Activated CD8-positive, alpha-beta memory T cell treated with anti-CD3 and anti-CD28 coated beads, Interleukin-2, amount 10 ng/mL, durations not matched to agents 7 days and 5 days (primary cell): ENCODE measurements at regions of chr7 and their contacts with region 1.

Region 1: GRCh38 chr7:101077303-101078089 is 7.8 kb upstream of the TRIM56 start:
- DNase-seq: peak; percentile 87
- ATAC-seq: peak; percentile 99
- H3K4me3 Mint-ChIP-seq: no peak overlapping the region
- H3K27ac Mint-ChIP-seq: no peak overlapping the region
- H3K4me1 Mint-ChIP-seq: peaks cover 5% of the 10 kb centered on the region
- H3K27me3 Mint-ChIP-seq: peaks cover 16% of the 10 kb centered on the region

Region 2: DNA sequence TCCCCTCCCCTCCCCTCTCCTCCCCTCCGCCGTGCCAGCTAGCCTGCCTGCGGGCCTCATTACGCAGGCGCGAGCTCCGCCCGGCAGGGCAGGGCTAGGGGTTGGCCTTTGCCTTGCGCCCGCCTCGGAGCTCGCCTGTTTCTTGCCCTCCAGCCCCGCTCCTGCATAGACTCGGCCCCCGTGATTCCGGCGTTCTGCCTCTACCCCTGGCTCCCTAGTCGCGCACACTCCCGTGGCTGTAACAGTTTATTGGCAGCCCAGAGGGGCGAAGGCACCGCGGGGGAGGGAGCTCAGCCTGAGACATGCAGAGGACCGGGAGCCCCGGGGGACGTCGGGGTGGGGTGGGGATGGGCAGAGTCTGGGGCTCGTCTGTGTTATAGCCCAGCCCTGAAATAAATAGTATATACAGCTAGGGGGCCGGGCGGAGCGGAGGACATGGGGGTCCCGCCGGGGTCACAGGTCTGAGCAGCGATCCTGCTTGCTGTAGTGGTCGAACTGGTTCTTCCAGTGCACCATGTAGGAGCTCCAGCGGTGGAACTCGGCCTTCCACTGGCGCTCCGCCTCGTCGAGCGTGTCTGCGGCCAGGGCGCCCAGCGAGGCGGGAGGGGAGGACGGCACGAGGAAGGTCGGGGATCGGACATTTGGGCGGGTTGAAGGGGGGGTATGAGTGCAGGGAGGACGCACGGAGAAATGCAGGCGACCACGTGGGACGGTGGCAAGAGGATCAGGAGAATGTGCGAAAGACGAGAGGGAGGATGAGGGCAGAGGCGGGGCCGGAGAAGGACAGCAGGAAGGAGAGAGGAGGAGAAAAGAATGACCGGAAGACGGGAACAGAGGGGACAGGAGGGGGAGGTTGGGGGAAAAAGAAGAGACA is 187.5 kb before region 1 on chr7:
- CTCF ChIA-PET with region 1: interaction called, 14 read pairs
- DNase-seq: peak; percentile 94
- ATAC-seq: peak; percentile 92
- H3K4me3 Mint-ChIP-seq: peak overlapping the region; percentile 77
- H3K27ac Mint-ChIP-seq: peak overlapping the region; percentile 77
- H3K4me1 Mint-ChIP-seq: peaks cover 46% of the 10 kb centered on the region
- H3K27me3 Mint-ChIP-seq: peaks cover 27% of the 10 kb centered on the region

Region 3: DNA sequence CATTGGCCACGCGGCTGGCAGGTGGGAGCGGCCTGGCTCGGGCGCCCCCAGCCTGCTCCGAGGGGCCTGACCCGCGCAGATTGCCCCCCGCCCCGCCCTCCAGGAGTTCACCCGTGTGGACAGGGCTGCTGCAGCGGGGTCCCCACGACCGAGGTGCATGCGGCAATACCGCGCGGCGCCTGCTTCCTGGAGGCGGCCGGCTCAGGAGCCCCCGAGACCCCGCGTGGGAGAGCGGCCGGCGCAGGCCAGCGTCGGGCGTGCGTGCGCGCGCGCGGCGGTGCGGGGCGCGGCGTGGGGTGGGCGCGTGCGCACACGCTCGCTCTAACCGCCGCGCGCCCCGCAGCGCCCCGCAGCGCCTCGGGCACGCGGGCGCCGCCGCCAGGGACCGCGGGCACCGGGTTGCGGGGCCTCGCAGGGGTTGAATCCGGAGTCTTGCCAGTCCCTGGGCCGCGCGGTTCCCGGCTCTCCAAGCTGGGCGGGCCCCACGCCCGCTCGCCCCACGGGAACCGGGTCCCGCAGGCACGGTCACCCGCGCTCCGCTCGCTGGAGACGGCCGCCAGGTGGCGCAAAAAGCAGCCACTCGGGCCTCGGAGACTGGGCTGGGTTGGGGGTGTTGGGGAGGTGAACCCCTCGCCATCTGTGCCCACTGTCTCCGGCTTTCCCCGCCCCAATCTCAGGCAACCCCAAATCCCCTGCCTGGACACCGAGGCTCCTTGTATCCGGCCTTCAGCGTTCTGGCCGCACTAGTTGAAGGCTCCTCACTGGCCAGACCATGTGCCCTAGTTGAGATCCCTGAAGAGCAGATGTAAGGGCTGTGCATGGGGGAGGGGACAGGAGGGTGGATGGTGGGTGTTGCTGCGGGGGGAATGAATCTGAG is 180.5 kb before region 1 on chr7:
- CTCF ChIA-PET with region 1: interaction called, 15 read pairs
- DNase-seq: no peak
- ATAC-seq: peak; percentile 28
- H3K4me3 Mint-ChIP-seq: no peak overlapping the region
- H3K27ac Mint-ChIP-seq: no peak overlapping the region
- H3K4me1 Mint-ChIP-seq: peaks cover 13% of the 10 kb centered on the region
- H3K27me3 Mint-ChIP-seq: peaks cover 45% of the 10 kb centered on the region

Region 4: GRCh38 chr7:101058355-101058754 is 19.1 kb before region 1 on chr7:
- CTCF ChIA-PET with region 1: interaction called, 11 read pairs
- DNase-seq: peak; percentile 71
- ATAC-seq: no peak
- H3K4me3 Mint-ChIP-seq: no peak overlapping the region
- H3K27ac Mint-ChIP-seq: no peak overlapping the region
- H3K4me1 Mint-ChIP-seq: no peaks in the 10 kb centered on the region
- H3K27me3 Mint-ChIP-seq: peaks cover 22% of the 10 kb centered on the region